ENCODE measurements at regions of chr17 and their contacts with region 1.

Region 1: DNA sequence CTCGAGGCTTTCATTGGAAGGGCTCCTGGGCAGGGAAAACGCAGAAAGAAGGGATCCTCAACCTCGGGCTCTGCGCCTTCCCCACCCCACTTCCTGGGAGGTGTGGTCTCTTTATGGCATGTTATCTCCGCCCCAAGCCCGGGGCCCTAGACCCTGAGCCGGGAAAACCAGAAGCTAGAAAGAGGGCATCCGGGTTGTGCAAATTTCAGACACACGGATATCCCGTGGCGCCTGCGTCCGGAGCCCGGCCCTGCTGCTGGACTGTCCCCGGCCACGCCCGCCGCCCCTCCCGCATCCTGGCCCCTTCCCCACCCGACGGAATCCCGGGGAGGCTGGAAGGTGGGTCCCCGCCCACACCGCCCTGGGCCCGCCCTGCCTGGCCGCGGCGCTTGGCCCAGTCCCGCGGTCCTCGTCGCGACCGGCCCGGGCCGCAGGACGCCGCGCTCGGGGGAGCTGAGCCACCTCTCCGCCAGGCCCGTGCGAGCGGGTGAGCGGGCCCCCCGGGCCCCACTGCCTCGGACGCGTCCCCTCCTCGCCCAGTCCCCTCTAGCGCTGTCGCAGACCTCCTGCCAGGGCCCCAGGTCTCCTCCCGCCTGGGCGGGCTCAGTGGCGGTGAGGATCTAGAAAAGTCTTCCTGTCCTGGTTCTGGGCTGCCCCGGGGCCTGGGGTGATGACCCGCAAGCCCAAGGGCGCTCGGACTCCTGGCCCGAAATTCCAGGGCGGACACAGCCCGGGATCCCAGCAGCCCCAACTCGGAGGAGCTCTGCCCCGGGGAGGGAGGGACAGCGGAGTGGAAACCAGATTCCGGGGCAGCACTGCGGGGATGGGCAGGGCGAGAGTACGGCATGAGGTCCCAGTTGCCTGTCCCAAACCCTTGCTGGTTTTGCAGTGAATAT is at the start of gene SLC16A5:
- DNase-seq: peak in 11 of 14 experiments; percentile 28 to 72 (median 53)
- ATAC-seq: peak; percentile 72
- H3K4me3 ChIP-seq: peak within 1 kb of the TSS; percentile 74
- H3K4me3 Mint-ChIP-seq: peak within 1 kb of the TSS; percentile 91
- H3K27ac ChIP-seq: peak within 1 kb of the TSS; percentile 41 to 53
- H3K27ac Mint-ChIP-seq: peak within 1 kb of the TSS; percentile 87
- H3K4me1 ChIP-seq: peaks cover 47% of the 10 kb centered on the region
- H3K4me1 Mint-ChIP-seq: peaks cover 63% of the 10 kb centered on the region
- H3K27me3 ChIP-seq: no peaks in the 10 kb centered on the region
- H3K27me3 Mint-ChIP-seq: no peaks in the 10 kb centered on the region
- CTCF ChIP-seq: no peak
- total RNA-seq, gene SLC16A5: 9.2 to 11.0 TPM

Region 2: DNA sequence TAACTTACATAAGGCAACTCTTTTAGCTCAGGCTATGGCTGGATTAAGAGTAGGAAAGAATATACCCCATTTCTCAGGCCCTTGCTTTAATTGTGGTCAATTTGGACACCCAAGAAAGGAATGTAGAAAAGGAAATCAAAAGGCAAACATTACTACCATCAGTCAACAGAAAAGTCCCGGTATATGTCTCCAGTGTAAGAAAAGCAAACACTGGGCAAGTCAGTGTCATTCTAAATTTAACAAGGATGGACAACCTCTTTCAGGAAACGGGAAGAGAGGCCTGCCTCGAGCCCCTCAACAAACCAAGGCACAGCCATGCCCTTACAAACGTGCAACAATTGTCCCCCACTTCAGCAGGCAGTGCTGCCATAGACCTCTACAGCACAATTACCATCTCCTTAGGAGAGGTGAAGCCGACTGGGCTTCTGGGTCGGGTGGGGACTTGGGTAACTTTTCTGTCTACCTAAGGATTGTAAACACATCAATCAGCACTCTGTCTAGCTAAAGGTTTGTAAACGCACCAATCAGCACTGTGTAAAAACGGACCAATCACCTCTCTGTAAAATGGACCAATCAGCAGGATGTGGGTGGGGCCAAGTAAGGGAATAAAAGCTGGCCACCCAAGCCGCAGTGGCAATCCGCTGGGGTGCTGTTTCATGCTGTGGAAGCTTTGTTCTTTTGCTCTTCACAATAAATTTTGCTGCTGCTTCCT is 63.0 kb before region 1 on chr17:
- CTCF ChIA-PET with region 1: no interaction called
- POLR2A ChIA-PET with region 1: no interaction called
- intact Hi-C with region 1: no loop called
- DNase-seq: peak in 8 of 14 experiments; percentile 17 to 55 (median 36)
- ATAC-seq: peak; percentile 69
- H3K4me3 ChIP-seq: no peak overlapping the region
- H3K4me3 Mint-ChIP-seq: peak overlapping the region; percentile 56
- H3K27ac ChIP-seq: no peak overlapping the region
- H3K27ac Mint-ChIP-seq: peak overlapping the region; percentile 70
- H3K4me1 ChIP-seq: peaks cover 13% of the 10 kb centered on the region
- H3K4me1 Mint-ChIP-seq: peaks cover 32% of the 10 kb centered on the region
- H3K27me3 ChIP-seq: no peaks in the 10 kb centered on the region
- H3K27me3 Mint-ChIP-seq: no peaks in the 10 kb centered on the region
- CTCF ChIP-seq: no peak

Region 3: DNA sequence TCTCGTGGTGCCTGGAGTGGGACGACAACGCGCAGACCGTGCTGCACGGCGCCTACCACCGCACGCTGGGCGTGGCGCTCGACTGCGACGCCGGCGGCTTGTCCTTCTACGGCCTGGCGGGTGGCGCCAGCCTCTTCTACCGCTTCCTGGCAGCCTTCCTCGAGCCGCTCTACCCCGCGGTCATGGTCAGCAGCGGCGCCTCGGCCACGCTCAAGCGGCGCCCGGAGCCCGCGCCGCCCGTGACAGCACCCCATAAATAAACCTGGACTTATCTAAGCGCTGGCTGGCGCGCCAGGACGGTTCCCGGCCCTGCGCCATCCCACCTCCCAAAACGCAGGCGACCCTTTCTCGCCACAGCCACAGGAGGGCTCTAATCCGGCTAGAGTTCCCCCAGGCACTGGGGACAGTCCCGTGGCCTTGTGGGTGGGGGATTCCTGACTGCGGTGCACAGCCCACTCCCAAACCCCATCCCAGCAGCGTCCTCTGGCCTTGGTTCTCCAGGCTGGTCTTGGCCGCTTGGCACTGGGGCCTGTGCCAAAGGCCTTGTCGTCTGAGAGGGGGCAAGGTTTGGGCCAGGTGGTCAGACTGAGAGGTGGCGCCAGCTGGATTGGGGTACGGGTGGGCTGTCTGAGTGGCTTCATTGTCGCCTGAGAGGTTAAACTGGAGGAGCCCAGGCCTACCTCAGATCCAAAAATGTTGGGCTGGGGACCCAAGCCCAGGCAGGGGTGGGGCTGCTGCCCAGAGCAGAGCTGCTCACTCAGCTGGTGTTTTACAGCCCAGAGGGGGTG is 10.1 kb before region 1 on chr17:
- CTCF ChIA-PET with region 1: no interaction called
- POLR2A ChIA-PET with region 1: interaction called, 18 read pairs
- intact Hi-C with region 1: no loop called
- DNase-seq: peak; percentile 29 to 74 (median 50)
- ATAC-seq: peak; percentile 93
- H3K4me3 ChIP-seq: peak overlapping the region; percentile 48
- H3K4me3 Mint-ChIP-seq: peak overlapping the region; percentile 74
- H3K27ac ChIP-seq: peak overlapping the region in 1 of 2 donors; percentile 29
- H3K27ac Mint-ChIP-seq: peak overlapping the region; percentile 68
- H3K4me1 ChIP-seq: peaks cover 28% of the 10 kb centered on the region
- H3K4me1 Mint-ChIP-seq: peaks cover 9% of the 10 kb centered on the region
- H3K27me3 ChIP-seq: no peaks in the 10 kb centered on the region
- H3K27me3 Mint-ChIP-seq: no peaks in the 10 kb centered on the region
- CTCF ChIP-seq: no peak

Measured in CD4-positive, alpha-beta T cell (primary cell).